ENCODE measurements at regions of chr3 and their contacts with region 1.

Region 1: DNA sequence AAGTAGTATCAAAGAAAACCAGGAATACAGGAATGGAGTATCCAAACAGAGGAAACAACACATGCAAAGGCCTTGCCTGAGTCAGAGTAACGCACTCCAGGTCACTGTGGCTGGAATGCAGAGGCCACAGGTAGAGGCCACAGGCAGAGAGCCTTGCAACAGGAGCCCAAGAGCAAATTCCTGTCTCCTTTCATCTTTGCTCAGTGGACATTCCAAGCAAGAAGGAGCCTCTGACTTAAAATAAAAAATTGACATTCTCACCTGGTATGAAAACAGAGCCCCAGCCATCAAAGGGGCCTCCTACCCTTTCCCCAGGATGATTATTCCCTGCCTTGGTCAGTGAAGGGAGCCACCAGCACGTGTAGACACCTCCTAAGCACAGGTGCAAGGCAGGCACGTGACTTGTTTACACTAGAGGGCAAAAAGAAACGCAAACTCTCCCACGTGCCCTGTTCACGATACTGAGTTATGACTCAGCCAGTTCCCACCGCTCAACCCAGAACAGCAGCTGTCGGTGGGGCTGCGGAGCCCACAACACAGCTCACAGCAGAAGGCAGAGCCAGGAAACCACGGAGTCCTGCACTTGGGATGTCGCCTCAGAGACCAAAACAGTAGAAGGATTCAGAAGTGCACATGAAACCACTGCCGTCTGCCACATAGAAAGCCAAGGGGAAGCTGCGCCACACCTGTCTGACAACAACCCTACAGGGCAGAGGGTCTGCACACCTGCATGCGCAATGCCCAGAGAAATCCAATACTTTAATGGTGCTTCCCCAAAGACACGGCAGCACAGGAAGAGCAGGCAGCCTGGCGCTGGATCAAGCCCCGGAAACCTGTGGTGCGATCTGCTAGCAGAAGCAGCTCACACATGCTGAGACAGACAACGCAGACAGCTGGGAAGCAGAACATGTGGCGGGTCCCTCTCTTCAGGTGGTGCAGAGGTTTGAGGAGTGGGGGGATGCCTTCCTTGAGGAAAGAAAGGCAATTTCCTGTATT is 52.1 kb downstream of the ITGB5 start:
- DNase-seq: no peak
- ATAC-seq: peak; percentile 30

Region 2: DNA sequence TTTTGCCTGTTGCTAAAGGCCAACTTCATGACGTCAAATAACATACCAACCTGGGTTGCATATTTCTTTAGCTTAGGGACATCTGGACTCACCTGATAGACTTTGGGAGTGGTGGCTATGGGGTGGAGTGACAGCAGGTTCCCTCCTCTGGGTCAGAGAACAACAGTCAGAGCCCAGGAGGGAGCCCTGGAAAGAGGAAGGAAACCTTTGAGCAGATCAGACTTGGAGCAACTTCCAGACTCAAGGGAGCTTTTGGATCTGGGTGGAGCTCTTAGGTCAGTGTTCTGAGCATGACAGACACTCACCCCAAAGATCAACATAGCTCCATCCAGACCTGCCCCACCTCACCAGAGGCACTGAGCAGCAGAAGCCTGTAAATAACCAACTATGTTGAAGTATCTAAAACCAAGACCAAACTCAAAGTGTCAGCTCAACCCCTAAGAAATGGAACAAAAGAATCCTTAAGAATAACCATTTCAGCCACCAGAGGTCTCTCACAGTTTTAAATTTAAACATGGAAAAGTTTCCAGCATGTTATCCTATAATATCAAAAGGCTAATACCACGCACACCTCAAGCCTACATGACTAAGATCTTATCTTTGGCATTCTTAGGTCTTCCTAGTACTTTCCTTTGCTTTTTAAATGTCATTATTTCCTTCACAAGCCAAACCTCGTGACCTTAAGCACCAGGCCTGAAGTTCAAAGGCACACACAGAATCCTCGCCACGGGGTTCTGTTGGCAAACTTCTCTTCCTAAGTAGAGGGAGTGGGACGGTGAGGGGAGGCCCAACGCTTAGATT is 48.4 kb before region 1 on chr3:
- intact Hi-C with region 1: loop called (anchors 5 kb)
- DNase-seq: no peak
- ATAC-seq: peak; percentile 33

Measured in Right ventricle myocardium inferior (tissue), 1 donor.